ENCODE measurements at regions of chr2 and their contacts with region 1.

Region 1: DNA sequence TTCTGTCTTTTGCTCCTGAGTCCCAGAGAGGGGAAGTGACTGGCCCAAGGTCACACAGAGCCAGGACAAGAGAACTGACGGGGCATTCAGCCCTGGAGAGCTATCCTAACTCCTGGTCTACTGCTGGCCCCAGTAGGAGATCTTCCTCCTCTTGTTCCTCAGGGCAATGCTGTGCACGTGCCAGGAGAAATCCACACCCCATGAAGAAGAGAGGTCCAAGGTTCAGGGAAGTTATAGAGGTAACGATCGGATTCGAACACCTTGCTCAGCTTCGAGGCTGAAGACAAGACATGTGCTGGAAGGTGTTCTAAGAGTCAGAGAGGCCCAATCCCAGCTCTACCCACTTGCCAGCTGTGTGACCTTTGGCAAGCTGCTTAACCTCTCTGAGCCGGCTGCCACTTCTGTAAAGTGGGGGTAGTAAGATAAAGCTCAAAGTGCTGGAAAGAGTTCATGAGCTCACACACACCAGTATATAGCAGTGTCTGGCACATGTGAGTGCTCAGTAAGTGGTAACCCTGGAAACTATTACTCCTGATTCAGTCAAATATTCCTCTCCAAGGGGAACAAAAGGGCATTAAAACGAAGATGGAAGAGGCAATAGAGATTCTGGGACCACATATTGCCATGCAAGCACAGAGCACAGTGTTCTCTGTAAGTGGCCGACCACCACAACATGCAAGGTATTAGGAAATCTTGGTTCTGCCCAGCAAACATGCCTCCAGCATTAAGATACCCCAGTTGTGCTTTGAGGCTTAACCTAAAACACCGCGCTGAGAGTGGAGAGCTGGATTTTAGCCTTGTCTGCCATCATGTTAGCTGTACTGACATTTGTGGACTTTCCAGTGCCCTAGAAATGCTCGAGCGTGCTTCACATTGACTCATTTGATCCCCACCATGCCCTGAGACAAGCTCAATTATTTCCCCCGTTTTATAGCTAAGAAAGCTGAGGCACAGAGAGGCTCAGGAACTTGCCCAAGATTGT is 25.6 kb downstream of the SERTAD2 start:
- DNase-seq: peak in 1 of 5 donors; percentile 25
- H3K4me3 ChIP-seq: no peak overlapping the region
- H3K4me3 Mint-ChIP-seq: no peak overlapping the region
- H3K27ac ChIP-seq: no peak overlapping the region
- H3K27ac Mint-ChIP-seq: peak overlapping the region in 1 of 8 donors; percentile 33
- H3K4me1 ChIP-seq: no peaks in the 10 kb centered on the region
- H3K4me1 Mint-ChIP-seq: no peaks in the 10 kb centered on the region
- H3K27me3 ChIP-seq: no peaks in the 10 kb centered on the region
- H3K27me3 Mint-ChIP-seq: no peaks in the 10 kb centered on the region

Region 2: DNA sequence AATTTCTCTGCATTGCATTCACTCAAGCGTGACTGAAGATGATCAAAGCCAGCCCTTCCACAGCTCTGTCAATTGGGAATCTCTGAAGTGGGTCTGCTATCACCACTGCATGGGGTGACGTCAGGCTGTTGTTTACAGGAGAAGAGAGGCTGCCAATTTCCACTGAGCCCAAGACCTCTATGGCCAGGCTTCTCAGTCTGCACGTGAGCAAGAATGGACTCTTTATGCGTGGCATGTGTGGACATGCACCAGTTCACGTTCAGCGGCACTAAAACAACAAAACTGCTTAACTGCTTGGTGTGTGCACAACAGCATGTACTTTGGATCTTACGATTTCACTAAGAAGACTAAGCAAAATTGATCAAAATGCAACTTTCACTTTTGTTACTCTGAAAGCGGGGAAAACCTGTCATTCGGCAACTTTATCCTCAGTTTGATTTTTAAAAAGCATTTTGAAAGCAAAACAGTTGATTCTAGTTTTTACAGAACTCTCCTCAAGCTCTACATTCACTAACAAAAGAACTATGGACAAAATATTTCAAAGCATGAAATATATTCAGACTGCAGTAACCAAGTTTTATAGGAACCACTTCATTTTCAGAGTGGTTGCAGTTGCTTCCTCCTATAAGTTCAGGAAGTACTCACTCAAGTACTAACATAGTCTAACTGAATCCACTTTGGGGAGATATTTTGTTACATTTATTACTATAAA is 102.6 kb after region 1 on chr2:
- CTCF ChIA-PET with region 1: no interaction called
- POLR2A ChIA-PET with region 1: interaction called, 15 read pairs
- DNase-seq: peak; percentile 6 to 63 (median 38)
- H3K4me3 ChIP-seq: peak overlapping the region; percentile 70
- H3K4me3 Mint-ChIP-seq: peak overlapping the region; percentile 85 to 94 (median 88)
- H3K27ac ChIP-seq: peak overlapping the region; percentile 60
- H3K27ac Mint-ChIP-seq: peak overlapping the region; percentile 87 to 99 (median 96)
- H3K4me1 ChIP-seq: peaks cover 44% of the 10 kb centered on the region
- H3K4me1 Mint-ChIP-seq: peaks cover 39 to 58% (median 48%) of the 10 kb centered on the region in 3 donors
- H3K27me3 ChIP-seq: no peaks in the 10 kb centered on the region
- H3K27me3 Mint-ChIP-seq: no peaks in the 10 kb centered on the region

Measured in CD8-positive, alpha-beta memory T cell (primary cell).